ENCODE measurements at regions of chr1 and their contacts with region 1.

Region 1: GRCh38 chr1:81335876-81336275 is 464.9 kb upstream of the ADGRL2 start:
- DNase-seq: no peak
- H3K4me3 Mint-ChIP-seq: no peak overlapping the region
- H3K27ac Mint-ChIP-seq: no peak overlapping the region
- H3K4me1 Mint-ChIP-seq: no peaks in the 10 kb centered on the region
- H3K27me3 Mint-ChIP-seq: no peaks in the 10 kb centered on the region

Region 2: GRCh38 chr1:81377406-81377805 is 41.5 kb after region 1 on chr1:
- CTCF ChIA-PET with region 1: no interaction called
- intact Hi-C with region 1: loop called (anchors 1 kb)
- DNase-seq: no peak
- H3K4me3 Mint-ChIP-seq: no peak overlapping the region
- H3K27ac Mint-ChIP-seq: no peak overlapping the region
- H3K4me1 Mint-ChIP-seq: no peaks in the 10 kb centered on the region
- H3K27me3 Mint-ChIP-seq: peaks cover under 1% of the 10 kb centered on the region

Region 3: DNA sequence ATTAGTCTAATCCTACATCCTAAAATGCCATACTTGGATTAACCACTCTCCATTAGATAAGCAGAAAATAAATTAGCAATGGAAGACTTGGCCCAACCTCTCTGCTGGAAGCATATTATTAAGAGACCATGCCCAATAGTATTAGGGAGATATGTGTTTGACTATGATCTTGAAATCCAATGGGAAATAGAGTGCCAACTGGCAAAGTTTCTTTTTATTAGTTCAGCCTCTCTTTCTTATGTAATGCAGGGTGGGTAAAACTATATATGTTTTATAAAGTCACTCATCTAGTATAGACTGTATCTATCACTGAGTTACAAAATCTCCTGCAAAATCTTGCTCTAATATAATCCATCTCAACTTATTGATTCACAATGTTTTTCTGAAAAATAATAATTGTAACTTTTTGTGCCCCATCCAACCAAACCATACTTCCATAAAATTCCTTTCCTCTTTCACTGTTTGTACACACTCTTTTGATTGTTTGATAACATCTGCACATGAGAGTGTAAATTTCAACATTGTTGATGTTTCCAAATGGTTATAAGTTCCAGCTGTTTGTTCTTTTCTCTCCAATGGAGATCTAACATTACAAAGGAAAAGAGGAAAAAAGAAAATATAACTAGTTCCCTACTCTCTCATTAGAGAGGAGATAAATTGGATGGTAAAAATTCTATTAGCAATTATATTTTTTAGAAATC is 56.8 kb after region 1 on chr1:
- CTCF ChIA-PET with region 1: no interaction called
- intact Hi-C with region 1: no loop called
- DNase-seq: no peak
- H3K4me3 Mint-ChIP-seq: no peak overlapping the region
- H3K27ac Mint-ChIP-seq: no peak overlapping the region
- H3K4me1 Mint-ChIP-seq: no peaks in the 10 kb centered on the region
- H3K27me3 Mint-ChIP-seq: no peaks in the 10 kb centered on the region

Region 4: GRCh38 chr1:82299656-82300055 is 963.8 kb after region 1 on chr1:
- CTCF ChIA-PET with region 1: no interaction called
- intact Hi-C with region 1: no loop called
- DNase-seq: no peak
- H3K4me3 Mint-ChIP-seq: no peak overlapping the region
- H3K27ac Mint-ChIP-seq: no peak overlapping the region
- H3K4me1 Mint-ChIP-seq: no peaks in the 10 kb centered on the region
- H3K27me3 Mint-ChIP-seq: no peaks in the 10 kb centered on the region